Activated T-helper 1 cell treated with anti-CD3 and anti-CD28 coated beads, Interleukin-12 subunit alpha, Interleukin-12 subunit beta, Interleukin-2, Interleukin-4 antibody, amounts not matched to agents 30 ng/mL and 10 ng/mL and 1 ng/mL, durations not matched to agents 14 hours and 24 hours and 36 hours (primary cell): ENCODE measurements at regions of chr6 and their contacts with region 1.

Region 1: GRCh38 chr6:38713812-38714211 is 1.3 kb upstream of the DNAH8 start:
- DNase-seq: peak; percentile 75
- H3K4me3 Mint-ChIP-seq: peak overlapping the region; percentile 65
- H3K27ac Mint-ChIP-seq: peak overlapping the region; percentile 76
- H3K4me1 Mint-ChIP-seq: peaks cover 42% of the 10 kb centered on the region
- H3K27me3 Mint-ChIP-seq: peaks cover 5% of the 10 kb centered on the region

Region 2: GRCh38 chr6:38725414-38726183 is 11.8 kb after region 1 on chr6:
- intact Hi-C with region 1: loop called (anchors 1 kb)
- DNase-seq: no peak
- H3K4me3 Mint-ChIP-seq: peak overlapping the region; percentile 34
- H3K27ac Mint-ChIP-seq: peak overlapping the region; percentile 50
- H3K4me1 Mint-ChIP-seq: peaks cover 24% of the 10 kb centered on the region
- H3K27me3 Mint-ChIP-seq: peaks cover 7% of the 10 kb centered on the region